GM12878 (cell line): ENCODE measurements at regions of chr4 and their contacts with region 1.

Region 1: DNA sequence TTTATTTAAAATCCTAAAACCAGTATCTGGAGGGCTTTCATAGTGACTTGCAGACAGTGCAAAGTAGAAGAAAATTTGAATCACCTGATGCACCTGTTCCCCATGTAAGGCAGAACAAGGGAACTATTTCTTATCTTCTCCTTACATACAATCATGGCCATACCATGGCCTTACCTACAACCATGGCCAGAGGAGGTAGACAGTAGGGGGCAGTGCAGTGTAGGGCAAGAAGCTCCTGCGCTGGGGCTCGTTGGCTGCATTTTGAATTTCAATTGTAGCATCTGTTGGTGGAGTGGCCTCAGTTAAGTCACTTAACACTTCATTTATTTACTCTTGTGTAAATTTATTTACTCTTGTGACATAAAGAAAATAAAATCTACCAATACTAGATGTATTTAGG is 33.0 kb downstream of the GALNTL6 start:
- DNase-seq: no peak
- ATAC-seq: peak; percentile 89
- H3K4me3 ChIP-seq: no peak overlapping the region
- H3K27ac ChIP-seq: no peak overlapping the region
- H3K4me1 ChIP-seq: no peaks in the 10 kb centered on the region
- H3K27me3 ChIP-seq: no peaks in the 10 kb centered on the region
- CTCF ChIP-seq: peak; percentile 60 to 65 (median 62)
- EP300 ChIP-seq: no peak
- POLR2A ChIP-seq: no peak
- RAD21 ChIP-seq: peak; percentile 86

Region 2: DNA sequence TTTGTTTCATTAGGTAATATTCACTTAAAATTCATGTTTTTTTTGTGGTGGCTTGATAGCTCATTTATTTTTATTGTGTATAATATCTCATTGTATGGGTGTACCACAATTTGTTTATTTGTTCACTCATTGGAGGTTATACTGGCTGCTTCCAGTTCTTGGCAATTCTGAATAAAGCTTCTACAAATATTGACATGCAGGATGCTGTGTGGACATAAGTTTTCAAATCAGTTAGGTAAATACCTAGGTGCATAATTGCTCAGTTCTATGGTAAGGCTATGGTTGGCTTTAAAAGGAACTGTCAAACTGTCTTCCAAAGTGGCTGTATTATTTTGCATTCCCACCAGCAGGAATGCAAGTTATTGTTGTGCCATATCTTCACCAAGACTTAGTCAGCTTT is 537.6 kb before region 1 on chr4:
- CTCF ChIA-PET with region 1: no interaction called
- POLR2A ChIA-PET with region 1: no interaction called
- RAD21 ChIA-PET with region 1: no interaction called
- SMC1A ChIA-PET with region 1: no interaction called
- in situ Hi-C with region 1: no loop called
- intact Hi-C with region 1: no loop called
- DNase-seq: no peak
- ATAC-seq: no peak
- H3K4me3 ChIP-seq: no peak overlapping the region
- H3K27ac ChIP-seq: no peak overlapping the region
- H3K4me1 ChIP-seq: no peaks in the 10 kb centered on the region
- H3K27me3 ChIP-seq: no peaks in the 10 kb centered on the region
- CTCF ChIP-seq: no peak
- EP300 ChIP-seq: no peak
- POLR2A ChIP-seq: no peak
- RAD21 ChIP-seq: no peak

Region 3: GRCh38 chr4:171774642-171775190 is 71.5 kb before region 1 on chr4:
- CTCF ChIA-PET with region 1: no interaction called
- POLR2A ChIA-PET with region 1: no interaction called
- RAD21 ChIA-PET with region 1: no interaction called
- SMC1A ChIA-PET with region 1: no interaction called
- in situ Hi-C with region 1: no loop called
- intact Hi-C with region 1: no loop called
- DNase-seq: no peak
- ATAC-seq: no peak
- H3K4me3 ChIP-seq: no peak overlapping the region
- H3K27ac ChIP-seq: no peak overlapping the region
- H3K4me1 ChIP-seq: no peaks in the 10 kb centered on the region
- H3K27me3 ChIP-seq: no peaks in the 10 kb centered on the region
- CTCF ChIP-seq: no peak
- EP300 ChIP-seq: no peak
- POLR2A ChIP-seq: no peak
- RAD21 ChIP-seq: no peak

Region 4: GRCh38 chr4:172035562-172035961 is 189.3 kb after region 1 on chr4:
- CTCF ChIA-PET with region 1: interaction called, 3 read pairs
- POLR2A ChIA-PET with region 1: no interaction called
- RAD21 ChIA-PET with region 1: no interaction called
- SMC1A ChIA-PET with region 1: no interaction called
- in situ Hi-C with region 1: no loop called
- intact Hi-C with region 1: loop called (anchors 2 kb)
- DNase-seq: no peak
- ATAC-seq: no peak
- H3K4me3 ChIP-seq: no peak overlapping the region
- H3K27ac ChIP-seq: no peak overlapping the region
- H3K4me1 ChIP-seq: no peaks in the 10 kb centered on the region
- H3K27me3 ChIP-seq: no peaks in the 10 kb centered on the region
- CTCF ChIP-seq: no peak
- EP300 ChIP-seq: no peak
- POLR2A ChIP-seq: no peak
- RAD21 ChIP-seq: no peak

Region 5: GRCh38 chr4:172202480-172203076 is 356.3 kb after region 1 on chr4:
- CTCF ChIA-PET with region 1: no interaction called
- POLR2A ChIA-PET with region 1: no interaction called
- RAD21 ChIA-PET with region 1: no interaction called
- SMC1A ChIA-PET with region 1: no interaction called
- in situ Hi-C with region 1: no loop called
- intact Hi-C with region 1: loop called (anchors 1 kb)
- DNase-seq: no peak
- ATAC-seq: peak; percentile 59
- H3K4me3 ChIP-seq: no peak overlapping the region
- H3K27ac ChIP-seq: no peak overlapping the region
- H3K4me1 ChIP-seq: no peaks in the 10 kb centered on the region
- H3K27me3 ChIP-seq: no peaks in the 10 kb centered on the region
- CTCF ChIP-seq: peak; percentile 45 to 51 (median 51); a peak in 5 of 6 replicates
- EP300 ChIP-seq: no peak
- POLR2A ChIP-seq: no peak
- RAD21 ChIP-seq: peak; percentile 69

Region 6: GRCh38 chr4:172830295-172830764 is 984.1 kb after region 1 on chr4:
- CTCF ChIA-PET with region 1: interaction called, 3 read pairs
- POLR2A ChIA-PET with region 1: no interaction called
- RAD21 ChIA-PET with region 1: no interaction called
- SMC1A ChIA-PET with region 1: no interaction called
- in situ Hi-C with region 1: loop called (anchors 10 kb)
- intact Hi-C with region 1: loop called (anchors 2 kb)
- DNase-seq: no peak
- ATAC-seq: no peak
- H3K4me3 ChIP-seq: no peak overlapping the region
- H3K27ac ChIP-seq: no peak overlapping the region
- H3K4me1 ChIP-seq: no peaks in the 10 kb centered on the region
- H3K27me3 ChIP-seq: no peaks in the 10 kb centered on the region; a peak in 1 of 4 replicates
- CTCF ChIP-seq: peak in 2 of 3 experiments; percentile 28 to 49; a peak in 3 of 6 replicates
- EP300 ChIP-seq: no peak
- POLR2A ChIP-seq: no peak
- RAD21 ChIP-seq: peak; percentile 65